ENCODE measurements at regions of chr2 and their contacts with region 1.

Region 1: GRCh38 chr2:96536445-96537065 is at the start of gene ARID5A:
- DNase-seq: peak; percentile 79
- ATAC-seq: peak; percentile 74
- H3K4me3 Mint-ChIP-seq: peak within 1 kb of the TSS; percentile 91
- H3K27ac Mint-ChIP-seq: peak within 1 kb of the TSS; percentile 90
- H3K4me1 Mint-ChIP-seq: peaks cover 53% of the 10 kb centered on the region
- H3K27me3 Mint-ChIP-seq: no peaks in the 10 kb centered on the region
- CTCF ChIP-seq: no peak
- total RNA-seq, gene ARID5A: 73.4 and 83.5 TPM in 2 replicates

Region 2: DNA sequence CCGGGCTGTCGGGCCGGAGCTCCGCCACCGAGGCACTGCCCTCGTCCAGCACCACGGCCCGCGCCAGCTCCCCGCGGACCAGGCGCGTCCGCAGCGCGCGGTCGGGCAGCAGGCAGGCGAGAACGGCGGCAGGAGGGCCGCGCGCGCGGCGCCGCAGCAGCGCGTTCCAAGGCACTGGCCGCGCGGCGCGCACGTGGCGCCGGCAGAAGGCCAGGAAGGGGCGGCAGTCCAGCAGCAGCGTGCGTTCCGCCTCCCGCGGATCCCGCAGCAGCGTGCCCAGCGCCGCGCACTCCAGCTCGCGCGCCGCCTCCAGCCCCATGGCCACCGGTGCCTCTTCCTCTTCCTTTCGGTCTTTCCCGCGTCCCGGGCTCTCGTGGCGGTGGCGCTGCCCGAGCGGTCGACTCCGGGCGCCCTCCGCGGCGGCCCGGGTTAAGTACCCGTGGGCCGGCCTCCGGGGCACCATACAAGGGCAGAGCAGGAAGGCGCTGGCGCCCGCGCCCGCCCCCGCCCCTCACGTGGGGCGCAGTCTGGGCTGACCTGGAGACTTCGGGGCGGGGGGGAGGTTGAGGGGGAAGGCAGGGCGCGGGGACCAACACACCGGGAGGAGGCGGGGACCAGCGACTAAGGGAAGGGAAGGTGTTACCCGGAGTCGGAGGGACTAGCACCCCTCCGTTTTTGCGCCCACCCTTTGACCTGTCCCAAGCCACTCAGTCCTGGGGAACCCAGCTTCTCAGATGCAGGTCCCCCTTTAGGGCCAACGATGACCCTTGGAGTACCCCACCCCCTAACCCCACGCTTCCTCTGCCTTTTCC is 391.3 kb before region 1 on chr2 and contains the start of gene DUSP2:
- CTCF ChIA-PET with region 1: no interaction called
- POLR2A ChIA-PET with region 1: interaction called, 6 read pairs
- intact Hi-C with region 1: loop called (anchors 5 kb)
- DNase-seq: peak; percentile 92
- ATAC-seq: peak; percentile 58
- H3K4me3 Mint-ChIP-seq: peak within 1 kb of the TSS; percentile 93
- H3K27ac Mint-ChIP-seq: peak within 1 kb of the TSS; percentile 98
- H3K4me1 Mint-ChIP-seq: peaks cover 71% of the 10 kb centered on the region
- H3K27me3 Mint-ChIP-seq: no peaks in the 10 kb centered on the region
- CTCF ChIP-seq: no peak
- total RNA-seq, gene DUSP2: 118 and 122 TPM in 2 replicates

Region 3: DNA sequence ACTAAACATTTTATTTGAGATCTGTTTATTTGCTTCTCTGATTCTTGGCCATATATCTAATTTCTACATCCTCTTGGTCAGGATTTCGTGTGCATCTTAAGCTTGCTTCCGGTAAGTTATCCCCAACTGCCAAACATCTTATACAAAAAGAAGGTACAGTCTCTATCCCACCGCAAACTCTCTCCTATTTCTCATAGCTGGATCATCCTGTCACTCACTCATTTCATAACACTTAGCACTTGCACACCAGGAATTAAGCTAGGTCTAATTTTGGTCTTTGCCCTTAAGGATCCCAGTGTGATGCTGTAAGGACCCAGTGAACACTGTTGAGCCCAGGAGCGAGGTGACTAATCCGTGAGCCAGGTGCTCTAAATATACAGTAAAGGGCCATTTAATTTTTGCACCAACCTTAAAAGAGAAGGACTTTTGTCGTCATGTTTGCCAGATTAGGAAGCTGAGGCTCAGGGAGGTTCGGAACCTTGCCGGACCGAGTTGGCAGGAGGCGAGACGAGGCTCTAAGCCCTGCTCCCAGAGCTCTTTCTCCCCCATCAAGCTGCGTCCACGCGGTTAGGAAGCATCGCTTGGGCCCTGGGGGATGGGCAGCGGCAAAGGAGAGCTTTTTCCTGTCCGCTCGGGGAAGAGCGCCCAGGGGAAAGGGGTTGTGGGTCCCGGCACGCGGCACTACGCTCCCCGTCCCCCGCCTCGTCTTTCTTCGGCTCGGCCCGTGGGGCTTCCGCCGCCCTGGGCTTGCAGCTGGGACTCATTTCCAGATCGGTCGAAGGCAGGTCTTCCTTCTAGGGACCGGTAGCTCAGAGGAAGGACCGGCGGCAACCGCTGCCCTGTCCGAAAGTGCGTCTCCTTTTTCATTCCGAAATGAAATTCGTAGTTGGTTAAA is 215.6 kb before region 1 on chr2:
- CTCF ChIA-PET with region 1: no interaction called
- POLR2A ChIA-PET with region 1: interaction called, 3 read pairs
- intact Hi-C with region 1: loop called (anchors 5 kb)
- DNase-seq: peak; percentile 34
- ATAC-seq: peak; percentile 15
- H3K4me3 Mint-ChIP-seq: peak overlapping the region; percentile 94
- H3K27ac Mint-ChIP-seq: peak overlapping the region; percentile 85
- H3K4me1 Mint-ChIP-seq: peaks cover 55% of the 10 kb centered on the region
- H3K27me3 Mint-ChIP-seq: no peaks in the 10 kb centered on the region
- CTCF ChIP-seq: no peak

Region 4: GRCh38 chr2:96336104-96336775 is 200.3 kb before region 1 on chr2:
- CTCF ChIA-PET with region 1: no interaction called
- POLR2A ChIA-PET with region 1: interaction called, 9 read pairs
- intact Hi-C with region 1: loop called (anchors 5 kb)
- DNase-seq: no peak
- ATAC-seq: no peak
- H3K4me3 Mint-ChIP-seq: peak overlapping the region; percentile 87
- H3K27ac Mint-ChIP-seq: peak overlapping the region; percentile 91
- H3K4me1 Mint-ChIP-seq: peaks cover 36% of the 10 kb centered on the region
- H3K27me3 Mint-ChIP-seq: no peaks in the 10 kb centered on the region
- CTCF ChIP-seq: no peak

Region 5: DNA sequence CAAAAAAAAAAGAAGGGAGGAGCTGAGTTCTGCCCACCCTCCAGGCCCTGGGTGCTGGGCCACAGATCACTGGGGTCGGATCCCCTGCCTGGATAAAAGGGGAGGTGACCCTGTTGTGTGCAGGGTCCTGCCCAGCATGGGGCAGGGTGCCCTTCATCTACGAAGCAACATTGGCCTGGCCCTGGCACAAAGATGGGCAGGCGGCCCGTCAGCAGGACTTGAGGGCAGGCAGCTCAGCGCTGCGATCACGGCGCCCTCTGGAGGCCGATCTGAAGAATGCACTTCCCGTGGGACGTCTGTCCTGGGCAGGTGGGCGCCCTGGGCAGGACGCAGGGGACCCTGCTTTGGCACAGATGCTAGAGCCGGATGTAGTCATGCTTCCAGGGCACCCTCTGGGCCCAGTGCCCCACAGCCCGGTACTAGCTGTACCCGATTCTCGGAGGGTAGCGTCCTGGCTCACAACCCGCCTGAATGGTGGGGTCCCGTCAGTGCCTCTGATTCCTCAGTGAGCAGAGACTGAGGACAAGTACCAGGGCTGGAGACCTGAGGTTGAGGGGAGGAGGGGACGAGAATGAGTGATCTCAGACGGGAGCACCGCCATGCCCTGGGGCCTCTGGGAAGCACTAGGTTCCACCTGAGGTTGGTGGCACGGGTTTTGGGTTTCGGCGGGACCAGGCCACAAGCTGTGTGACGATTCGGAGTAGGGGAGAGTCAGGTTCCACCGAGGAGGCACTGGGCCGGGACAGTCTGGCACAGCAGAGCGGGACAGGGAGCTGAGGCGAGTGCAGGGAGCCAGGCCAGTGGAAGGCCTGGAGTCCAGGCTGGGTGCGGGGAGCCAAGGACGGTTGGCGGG is 18.0 kb after region 1 on chr2:
- CTCF ChIA-PET with region 1: interaction called, 34 read pairs
- POLR2A ChIA-PET with region 1: interaction called, 15 read pairs
- intact Hi-C with region 1: loop called (anchors 1 kb)
- DNase-seq: peak; percentile 67
- ATAC-seq: peak; percentile 85
- H3K4me3 Mint-ChIP-seq: no peak overlapping the region
- H3K27ac Mint-ChIP-seq: no peak overlapping the region
- H3K4me1 Mint-ChIP-seq: peaks cover 17% of the 10 kb centered on the region
- H3K27me3 Mint-ChIP-seq: no peaks in the 10 kb centered on the region
- CTCF ChIP-seq: peak; percentile 74

Region 6: GRCh38 chr2:96638144-96639121 is 101.9 kb after region 1 on chr2 and contains the start of gene KANSL3:
- CTCF ChIA-PET with region 1: no interaction called
- POLR2A ChIA-PET with region 1: interaction called, 5 read pairs
- intact Hi-C with region 1: loop called (anchors 2 kb)
- DNase-seq: peak; percentile 94
- ATAC-seq: peak; percentile 90
- H3K4me3 Mint-ChIP-seq: peak within 1 kb of the TSS; percentile 93
- H3K27ac Mint-ChIP-seq: peak within 1 kb of the TSS; percentile 87
- H3K4me1 Mint-ChIP-seq: peaks cover 36% of the 10 kb centered on the region
- H3K27me3 Mint-ChIP-seq: no peaks in the 10 kb centered on the region
- CTCF ChIP-seq: no peak
- total RNA-seq, gene KANSL3: 24.6 and 31.4 TPM in 2 replicates

Region 7: GRCh38 chr2:96760036-96760985 is 223.8 kb after region 1 on chr2 and contains the start of gene CNNM4:
- CTCF ChIA-PET with region 1: interaction called, 4 read pairs
- POLR2A ChIA-PET with region 1: no interaction called
- intact Hi-C with region 1: loop called (anchors 2 kb)
- DNase-seq: peak; percentile 89
- ATAC-seq: peak; percentile 91
- H3K4me3 Mint-ChIP-seq: peak within 1 kb of the TSS; percentile 90
- H3K27ac Mint-ChIP-seq: peak within 1 kb of the TSS; percentile 89
- H3K4me1 Mint-ChIP-seq: peaks cover 49% of the 10 kb centered on the region
- H3K27me3 Mint-ChIP-seq: no peaks in the 10 kb centered on the region
- CTCF ChIP-seq: no peak
- total RNA-seq, gene CNNM4: 7.4 and 10.0 TPM in 2 replicates